Activated CD4-positive, alpha-beta memory T cell treated with anti-CD3 and anti-CD28 coated beads for 36 hours (primary cell): ENCODE measurements at regions of chr11 and their contacts with region 1.

Region 1: GRCh38 chr11:59207988-59208451 is 4.7 kb downstream of the MPEG1 start:
- DNase-seq: peak; percentile 44
- H3K4me3 Mint-ChIP-seq: no peak overlapping the region
- H3K27ac Mint-ChIP-seq: no peak overlapping the region
- H3K4me1 Mint-ChIP-seq: peaks cover 32% of the 10 kb centered on the region
- H3K27me3 Mint-ChIP-seq: peaks cover 13% of the 10 kb centered on the region

Region 2: DNA sequence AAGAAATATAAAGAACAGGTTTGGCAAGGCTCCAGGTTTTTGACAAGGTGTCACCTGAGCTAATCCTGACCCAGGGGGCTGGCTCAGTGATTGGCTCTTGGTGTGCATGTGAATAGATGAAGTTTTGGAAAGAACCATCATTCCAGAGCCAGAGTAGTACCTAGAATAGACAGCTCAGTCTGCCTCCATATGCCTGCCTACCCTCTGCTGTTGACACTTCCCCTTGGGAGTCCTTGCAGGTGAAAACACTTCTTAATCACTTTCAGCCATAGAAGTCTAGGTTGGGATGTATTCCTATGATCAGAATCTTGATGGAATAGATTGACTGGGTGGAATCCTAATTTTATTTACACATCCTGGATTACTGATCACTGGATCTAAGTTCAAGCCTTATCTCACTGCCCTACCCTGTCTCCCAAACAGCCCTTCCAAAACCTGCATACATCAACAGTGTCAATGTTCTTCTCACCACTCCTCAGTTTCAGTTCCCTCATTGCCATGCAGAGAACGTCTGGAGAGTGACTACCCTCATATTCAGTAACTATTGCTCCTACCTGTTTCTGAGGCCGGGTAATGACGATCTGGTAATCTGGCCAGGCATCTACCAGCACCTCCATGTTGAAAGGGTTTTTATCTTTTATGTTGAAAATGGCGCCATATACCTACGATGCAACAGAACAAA is 370.2 kb before region 1 on chr11:
- CTCF ChIA-PET with region 1: no interaction called
- POLR2A ChIA-PET with region 1: no interaction called
- intact Hi-C with region 1: no loop called
- DNase-seq: no peak
- H3K4me3 Mint-ChIP-seq: no peak overlapping the region
- H3K27ac Mint-ChIP-seq: no peak overlapping the region
- H3K4me1 Mint-ChIP-seq: no peaks in the 10 kb centered on the region
- H3K27me3 Mint-ChIP-seq: peaks cover 12% of the 10 kb centered on the region

Region 3: DNA sequence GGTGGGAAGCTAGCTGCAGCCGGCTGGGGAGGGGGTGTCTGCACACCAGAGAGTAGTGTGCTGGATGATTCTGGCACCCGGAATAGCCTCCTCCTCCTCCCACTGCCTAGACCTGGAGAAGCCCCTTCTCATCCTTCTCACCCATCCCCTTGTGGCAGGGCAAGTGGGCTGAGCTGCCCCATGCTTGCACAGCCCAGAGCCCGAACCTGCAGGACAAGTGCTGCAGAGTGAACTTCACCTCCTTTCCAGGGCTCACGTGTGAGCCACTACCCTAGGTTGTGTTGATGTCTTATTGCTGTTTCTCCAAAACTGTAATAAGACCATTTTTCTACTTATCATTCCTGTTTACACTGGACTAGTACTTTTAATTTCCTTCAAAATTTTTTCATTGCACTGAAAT is 178.0 kb before region 1 on chr11:
- CTCF ChIA-PET with region 1: no interaction called
- POLR2A ChIA-PET with region 1: no interaction called
- intact Hi-C with region 1: no loop called
- DNase-seq: no peak
- H3K4me3 Mint-ChIP-seq: no peak overlapping the region
- H3K27ac Mint-ChIP-seq: no peak overlapping the region
- H3K4me1 Mint-ChIP-seq: no peaks in the 10 kb centered on the region
- H3K27me3 Mint-ChIP-seq: peaks cover 17% of the 10 kb centered on the region

Region 4: GRCh38 chr11:59191890-59192289 is 16.1 kb before region 1 on chr11:
- CTCF ChIA-PET with region 1: interaction called, 27 read pairs
- POLR2A ChIA-PET with region 1: no interaction called
- intact Hi-C with region 1: no loop called
- DNase-seq: no peak
- H3K4me3 Mint-ChIP-seq: no peak overlapping the region
- H3K27ac Mint-ChIP-seq: no peak overlapping the region
- H3K4me1 Mint-ChIP-seq: no peaks in the 10 kb centered on the region
- H3K27me3 Mint-ChIP-seq: no peaks in the 10 kb centered on the region

Region 5: DNA sequence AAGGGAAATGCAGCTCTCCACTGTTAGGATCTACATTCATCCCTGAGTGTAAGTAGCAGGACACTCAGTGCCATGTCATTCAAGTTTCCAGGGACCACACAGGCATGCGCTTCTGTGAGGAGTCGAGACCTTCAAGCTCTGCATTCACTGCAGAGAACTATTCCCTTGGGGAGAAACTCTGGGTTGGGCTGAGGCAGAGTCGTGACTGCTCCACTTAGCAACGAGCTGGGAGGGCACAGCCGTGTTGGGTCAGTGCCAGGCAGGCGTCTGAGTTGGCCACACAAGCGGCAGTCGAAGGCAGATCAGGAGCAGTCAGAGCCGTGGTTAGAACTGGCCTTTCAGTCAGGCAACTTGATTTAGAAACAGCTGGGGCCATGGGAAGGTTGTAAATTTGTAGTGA is 10.0 kb before region 1 on chr11:
- CTCF ChIA-PET with region 1: interaction called, 10 read pairs
- POLR2A ChIA-PET with region 1: no interaction called
- intact Hi-C with region 1: loop called (anchors 1 kb)
- DNase-seq: no peak
- H3K4me3 Mint-ChIP-seq: no peak overlapping the region
- H3K27ac Mint-ChIP-seq: no peak overlapping the region
- H3K4me1 Mint-ChIP-seq: peaks cover 16% of the 10 kb centered on the region
- H3K27me3 Mint-ChIP-seq: no peaks in the 10 kb centered on the region

Region 6: DNA sequence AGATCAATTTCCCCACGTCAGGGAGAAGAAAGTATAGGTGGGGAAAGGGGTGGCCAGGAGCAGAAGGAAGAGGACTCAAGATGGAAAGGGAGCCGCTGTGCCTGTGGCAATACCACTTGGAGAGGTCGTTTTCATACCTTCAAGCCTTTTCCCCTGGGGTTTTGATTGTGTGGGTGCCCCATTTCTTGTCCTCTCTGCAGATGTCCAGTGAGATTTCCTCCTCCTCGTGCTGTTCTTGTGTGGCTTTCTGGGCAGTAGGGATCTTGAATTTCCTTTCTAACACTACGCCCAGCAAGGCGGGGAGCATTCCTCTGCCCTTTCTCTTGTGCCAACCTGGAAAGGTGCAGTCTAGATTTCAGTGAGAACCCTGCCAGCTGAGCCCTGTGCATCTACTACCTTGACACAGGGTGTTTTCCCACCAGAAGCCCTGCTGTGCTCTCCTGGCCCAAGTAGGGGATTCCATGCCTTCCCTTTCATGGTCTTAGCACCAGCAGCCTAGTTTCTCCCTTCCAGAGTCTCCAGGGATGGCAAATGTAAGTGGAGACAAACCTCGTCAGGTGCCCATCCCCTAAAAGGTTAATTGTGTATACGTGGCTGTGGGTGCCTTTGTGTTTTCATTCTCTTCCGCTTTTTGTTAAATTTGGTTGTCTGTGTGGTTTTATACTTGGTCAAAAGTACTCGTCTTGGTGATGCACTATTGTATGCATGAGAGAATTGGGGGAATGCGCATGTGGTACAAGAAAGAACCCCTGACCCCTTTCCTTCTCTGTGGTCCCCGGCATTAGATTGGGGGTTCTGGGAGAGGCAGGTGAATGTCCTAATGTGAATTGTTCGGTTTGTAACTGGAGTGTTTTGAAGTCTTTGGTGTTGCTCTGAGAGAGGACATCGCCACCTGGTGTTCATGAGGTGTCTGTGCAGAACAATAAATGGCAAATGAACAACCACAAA is 76.1 kb after region 1 on chr11:
- CTCF ChIA-PET with region 1: no interaction called
- POLR2A ChIA-PET with region 1: no interaction called
- intact Hi-C with region 1: loop called (anchors 1 kb)
- DNase-seq: peak; percentile 58
- H3K4me3 Mint-ChIP-seq: peak overlapping the region; percentile 42
- H3K27ac Mint-ChIP-seq: no peak overlapping the region
- H3K4me1 Mint-ChIP-seq: peaks cover 14% of the 10 kb centered on the region
- H3K27me3 Mint-ChIP-seq: peaks cover 5% of the 10 kb centered on the region

Region 7: DNA sequence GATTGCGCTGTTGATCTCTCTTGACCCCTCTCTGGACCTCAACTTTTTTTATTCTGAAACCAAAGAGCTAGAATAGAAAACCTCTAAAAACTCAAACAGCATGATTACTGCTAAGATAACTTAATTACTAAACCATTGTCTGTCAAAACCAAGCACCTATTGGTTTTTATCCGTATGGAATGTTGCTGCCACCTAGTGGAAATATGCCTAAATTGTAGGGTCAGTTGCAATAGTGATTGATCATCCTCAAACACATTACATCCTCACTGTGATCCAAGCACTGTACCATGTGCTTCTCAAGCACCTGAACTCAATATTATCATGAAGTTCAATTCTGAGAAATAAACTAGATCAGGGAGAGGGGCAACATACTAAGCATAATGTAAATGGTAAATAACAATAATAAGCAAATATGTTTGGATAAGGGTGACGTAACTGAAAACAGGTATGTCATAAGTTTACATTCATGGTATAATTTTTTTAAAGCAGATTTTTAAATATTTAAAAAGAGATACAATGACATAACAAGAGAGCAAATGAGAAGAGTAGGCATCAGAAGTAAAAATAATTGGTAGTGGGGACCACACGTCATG is 222.0 kb after region 1 on chr11:
- CTCF ChIA-PET with region 1: no interaction called
- POLR2A ChIA-PET with region 1: no interaction called
- intact Hi-C with region 1: loop called (anchors 1 kb)
- DNase-seq: no peak
- H3K4me3 Mint-ChIP-seq: no peak overlapping the region
- H3K27ac Mint-ChIP-seq: no peak overlapping the region
- H3K4me1 Mint-ChIP-seq: no peaks in the 10 kb centered on the region
- H3K27me3 Mint-ChIP-seq: peaks cover 1% of the 10 kb centered on the region

Region 8: DNA sequence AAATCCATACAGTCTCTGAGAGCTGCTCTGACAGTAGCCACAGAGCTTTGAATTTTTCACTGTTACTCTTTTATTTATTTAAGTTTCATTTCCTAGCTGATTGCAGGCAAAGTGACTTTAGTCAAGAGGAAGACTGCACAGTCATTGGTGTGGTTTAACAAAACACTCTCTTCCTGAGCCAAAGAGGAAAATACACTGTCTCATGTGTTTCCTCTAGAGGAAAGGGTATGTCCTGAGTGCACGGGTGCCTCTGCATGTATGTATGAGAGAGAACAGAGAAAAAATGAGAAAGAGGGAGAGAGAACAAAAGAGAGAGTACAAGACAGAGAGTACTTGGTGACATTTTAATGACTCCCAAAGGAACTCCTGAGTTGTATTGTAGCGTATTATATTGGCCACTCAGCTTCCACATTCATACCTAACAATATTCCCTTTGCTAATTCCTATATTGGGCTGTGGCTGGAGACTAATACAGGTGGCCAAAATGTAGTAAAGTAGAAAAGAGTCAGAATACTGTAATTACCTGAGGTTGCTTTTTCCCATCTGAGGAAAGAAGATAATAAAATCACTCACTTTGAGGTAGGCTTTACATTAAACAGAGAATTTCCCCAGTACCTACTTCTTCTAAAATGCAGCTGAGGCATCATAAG is 303.0 kb after region 1 on chr11 and contains the start of gene OR4D9:
- CTCF ChIA-PET with region 1: no interaction called
- POLR2A ChIA-PET with region 1: no interaction called
- intact Hi-C with region 1: no loop called
- DNase-seq: no peak
- H3K4me3 Mint-ChIP-seq: no peak within 1 kb of the TSS
- H3K27ac Mint-ChIP-seq: no peak within 1 kb of the TSS
- H3K4me1 Mint-ChIP-seq: peaks cover 14% of the 10 kb centered on the region
- H3K27me3 Mint-ChIP-seq: no peaks in the 10 kb centered on the region
- total RNA-seq, gene OR4D9: not detected